Activated CD8-positive, alpha-beta T cell treated with anti-CD3 and anti-CD28 coated beads for 36 hours (primary cell): ENCODE measurements at regions of chr5 and their contacts with region 1.

Region 1: GRCh38 chr5:55421074-55421529 is 113.3 kb downstream of the MTREX start:
- DNase-seq: peak; percentile 39
- ATAC-seq: peak; percentile 99
- H3K4me3 Mint-ChIP-seq: no peak overlapping the region
- H3K27ac Mint-ChIP-seq: no peak overlapping the region
- H3K4me1 Mint-ChIP-seq: peaks cover 29% of the 10 kb centered on the region
- H3K27me3 Mint-ChIP-seq: no peaks in the 10 kb centered on the region
- CTCF ChIP-seq: no peak

Region 2: DNA sequence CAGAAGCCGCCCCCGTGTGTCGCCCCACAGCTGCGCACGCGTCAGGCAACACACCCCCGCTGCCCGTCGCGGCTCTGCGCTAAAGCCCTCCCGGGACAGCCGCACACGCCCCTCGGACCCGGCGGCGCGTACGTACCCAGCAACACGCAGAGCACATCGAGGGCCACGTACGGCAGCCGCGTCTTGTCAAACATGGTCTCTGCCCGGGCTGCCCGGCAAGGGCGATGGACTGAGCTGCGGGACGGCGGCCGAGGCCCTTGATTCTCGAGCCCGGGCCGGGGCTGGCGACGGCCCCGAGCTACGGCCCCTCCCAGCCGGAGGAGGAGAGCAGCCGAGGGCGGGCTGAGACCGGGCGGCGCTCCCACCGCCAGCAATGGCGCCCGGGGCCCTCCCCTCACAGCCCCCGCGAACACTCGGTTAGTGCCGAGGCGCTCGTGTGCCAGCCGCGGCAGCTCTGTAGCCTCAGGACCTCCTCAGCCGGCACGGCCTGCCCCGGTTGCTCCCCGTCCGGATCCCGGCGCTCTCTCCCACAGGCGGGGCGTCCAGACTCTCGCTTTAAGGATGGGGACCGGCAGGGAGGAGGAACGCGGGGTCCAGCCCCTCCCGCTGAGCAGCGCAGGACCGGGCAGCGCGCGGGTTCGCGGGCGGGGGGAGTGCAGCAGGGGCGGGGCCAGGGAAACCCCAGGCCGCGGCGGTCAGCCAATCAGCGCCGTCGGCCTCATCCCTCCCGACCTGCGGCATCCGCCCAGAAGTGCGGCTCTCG is 113.5 kb after region 1 on chr5 and contains the start of gene PLPP1:
- CTCF ChIA-PET with region 1: no interaction called
- POLR2A ChIA-PET with region 1: no interaction called
- intact Hi-C with region 1: loop called (anchors 10 kb)
- DNase-seq: peak; percentile 84
- ATAC-seq: peak; percentile 83
- H3K4me3 Mint-ChIP-seq: peak within 1 kb of the TSS; percentile 76
- H3K27ac Mint-ChIP-seq: peak within 1 kb of the TSS; percentile 88
- H3K4me1 Mint-ChIP-seq: peaks cover 44% of the 10 kb centered on the region
- H3K27me3 Mint-ChIP-seq: no peaks in the 10 kb centered on the region
- CTCF ChIP-seq: no peak
- total RNA-seq, gene PLPP1: 15.9 to 17.6 TPM

Region 3: DNA sequence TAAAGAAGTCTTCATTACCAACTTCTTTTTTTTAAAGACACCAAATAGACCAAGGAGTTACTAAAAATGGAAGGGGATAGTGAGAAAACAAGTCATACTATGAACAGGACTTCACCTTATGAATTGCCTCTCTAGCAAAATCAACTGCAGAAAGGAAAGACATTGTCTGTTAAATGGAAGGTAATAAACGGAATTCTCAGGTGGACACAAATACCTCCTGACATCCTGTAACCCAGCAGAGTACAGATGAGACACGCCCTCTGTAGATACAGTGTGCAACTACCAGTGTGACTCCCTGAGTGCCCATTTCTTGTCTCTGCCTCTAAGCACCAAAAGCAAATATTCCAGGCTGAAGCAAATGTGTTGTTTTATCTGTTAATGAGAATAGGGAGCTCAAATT is 125.8 kb after region 1 on chr5:
- CTCF ChIA-PET with region 1: no interaction called
- POLR2A ChIA-PET with region 1: no interaction called
- intact Hi-C with region 1: no loop called
- DNase-seq: no peak
- ATAC-seq: no peak
- H3K4me3 Mint-ChIP-seq: no peak overlapping the region
- H3K27ac Mint-ChIP-seq: no peak overlapping the region
- H3K4me1 Mint-ChIP-seq: peaks cover 10% of the 10 kb centered on the region
- H3K27me3 Mint-ChIP-seq: peaks cover 8% of the 10 kb centered on the region
- CTCF ChIP-seq: no peak